Activated CD4-positive, alpha-beta memory T cell treated with anti-CD3 and anti-CD28 coated beads for 36 hours (primary cell): ENCODE measurements at regions of chr20 and their contacts with region 1.

Region 1: GRCh38 chr20:2984956-2985661 is 58.3 kb upstream of the GNRH2 start:
- DNase-seq: peak; percentile 72
- H3K4me3 Mint-ChIP-seq: no peak overlapping the region
- H3K27ac Mint-ChIP-seq: no peak overlapping the region
- H3K4me1 Mint-ChIP-seq: peaks cover 20% of the 10 kb centered on the region
- H3K27me3 Mint-ChIP-seq: no peaks in the 10 kb centered on the region

Region 2: GRCh38 chr20:2752567-2753460 is 232.3 kb before region 1 on chr20:
- CTCF ChIA-PET with region 1: no interaction called
- POLR2A ChIA-PET with region 1: no interaction called
- intact Hi-C with region 1: loop called (anchors 10 kb)
- DNase-seq: peak; percentile 64
- H3K4me3 Mint-ChIP-seq: peak overlapping the region; percentile 78
- H3K27ac Mint-ChIP-seq: no peak overlapping the region
- H3K4me1 Mint-ChIP-seq: peaks cover 37% of the 10 kb centered on the region
- H3K27me3 Mint-ChIP-seq: peaks cover 23% of the 10 kb centered on the region

Region 3: GRCh38 chr20:2873010-2873746 is 111.9 kb before region 1 on chr20 and contains the start of gene PTPRA:
- CTCF ChIA-PET with region 1: interaction called, 4 read pairs
- POLR2A ChIA-PET with region 1: interaction called, 5 read pairs
- intact Hi-C with region 1: loop called (anchors 1 kb)
- DNase-seq: peak; percentile 95
- H3K4me3 Mint-ChIP-seq: peak within 1 kb of the TSS; percentile 90
- H3K27ac Mint-ChIP-seq: peak within 1 kb of the TSS; percentile 91
- H3K4me1 Mint-ChIP-seq: peaks cover 43% of the 10 kb centered on the region
- H3K27me3 Mint-ChIP-seq: no peaks in the 10 kb centered on the region
- total RNA-seq, gene PTPRA: 61.1 to 62.8 TPM

Region 4: GRCh38 chr20:2946988-2947961 is 37.8 kb before region 1 on chr20:
- CTCF ChIA-PET with region 1: no interaction called
- POLR2A ChIA-PET with region 1: no interaction called
- intact Hi-C with region 1: no loop called
- DNase-seq: no peak
- H3K4me3 Mint-ChIP-seq: no peak overlapping the region
- H3K27ac Mint-ChIP-seq: no peak overlapping the region
- H3K4me1 Mint-ChIP-seq: peaks cover 15% of the 10 kb centered on the region
- H3K27me3 Mint-ChIP-seq: no peaks in the 10 kb centered on the region

Region 5: GRCh38 chr20:3000852-3001523 is 15.9 kb after region 1 on chr20:
- CTCF ChIA-PET with region 1: interaction called, 12 read pairs
- POLR2A ChIA-PET with region 1: interaction called, 6 read pairs
- intact Hi-C with region 1: loop called (anchors 2 kb)
- DNase-seq: no peak
- H3K4me3 Mint-ChIP-seq: no peak overlapping the region
- H3K27ac Mint-ChIP-seq: peak overlapping the region; percentile 51
- H3K4me1 Mint-ChIP-seq: peaks cover 9% of the 10 kb centered on the region
- H3K27me3 Mint-ChIP-seq: no peaks in the 10 kb centered on the region

Region 6: DNA sequence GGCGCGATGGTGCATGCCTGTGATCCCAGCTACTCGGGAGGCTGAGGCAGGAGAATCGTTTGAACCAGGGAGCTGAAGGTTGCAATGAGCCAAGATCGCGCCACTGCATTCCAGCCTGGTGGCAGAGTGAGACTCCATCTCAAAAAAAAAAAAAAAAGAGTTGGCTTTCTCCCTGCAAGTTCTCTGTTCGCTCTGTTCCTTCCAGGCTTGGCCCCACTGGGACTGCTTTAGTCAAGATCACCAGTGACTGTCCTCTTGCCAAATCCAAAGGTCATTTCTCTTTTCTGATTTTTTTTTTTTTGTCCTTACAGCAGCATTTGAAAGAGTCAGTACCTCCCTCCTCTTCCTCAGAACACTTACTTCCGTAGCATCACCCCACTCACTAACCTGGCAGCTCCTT is 47.5 kb after region 1 on chr20:
- CTCF ChIA-PET with region 1: no interaction called
- POLR2A ChIA-PET with region 1: interaction called, 4 read pairs
- intact Hi-C with region 1: loop called (anchors 1 kb)
- DNase-seq: no peak
- H3K4me3 Mint-ChIP-seq: no peak overlapping the region
- H3K27ac Mint-ChIP-seq: no peak overlapping the region
- H3K4me1 Mint-ChIP-seq: peaks cover 13% of the 10 kb centered on the region
- H3K27me3 Mint-ChIP-seq: no peaks in the 10 kb centered on the region